Dendritic cell treated with granulocyte-macrophage colony-stimulating factor and Interleukin-4, amounts not matched to agents 40 ng/mL and 50 ng/mL, for 4 days (primary cell): ENCODE measurements at regions of chr9 and their contacts with region 1.

Region 1: DNA sequence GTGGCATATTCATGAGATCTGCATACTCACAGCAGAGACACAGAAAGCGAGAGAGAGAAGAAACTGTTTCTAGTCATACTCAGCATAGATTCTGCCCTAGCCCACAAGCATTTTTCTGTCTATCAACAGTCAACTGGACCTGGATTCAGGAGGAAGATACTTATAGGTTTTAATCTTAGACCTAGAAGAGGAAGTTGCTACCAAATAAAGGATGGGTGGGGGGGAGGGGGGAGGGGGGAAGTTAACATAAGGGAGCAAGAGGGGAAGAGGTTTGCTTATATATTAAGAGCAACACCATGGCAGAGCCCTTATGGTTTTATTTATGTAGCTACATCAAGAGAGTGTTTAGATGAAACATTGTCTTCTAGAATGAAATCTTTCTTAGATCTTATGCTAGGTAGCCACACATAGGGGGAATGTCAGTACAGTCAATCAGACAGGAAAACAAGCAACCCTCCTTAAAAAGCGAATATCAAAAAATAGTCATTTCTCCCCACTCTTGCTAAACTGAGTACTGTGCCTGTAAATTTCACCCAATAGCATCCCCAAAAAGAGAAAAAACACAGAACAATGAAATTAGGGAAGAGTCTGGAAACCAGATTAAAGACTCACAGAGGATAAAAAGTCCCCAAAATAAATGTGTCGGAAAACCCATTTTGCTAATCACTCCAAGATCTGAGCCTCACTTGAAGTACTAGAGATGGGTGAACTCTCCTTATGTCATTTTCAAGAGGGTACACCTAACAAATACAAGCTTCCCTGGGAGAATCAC is 192.7 kb upstream of the NR4A3 start:
- H3K4me3 Mint-ChIP-seq: no peak overlapping the region
- H3K27ac Mint-ChIP-seq: peak overlapping the region; percentile 3
- H3K4me1 Mint-ChIP-seq: peaks cover 39% of the 10 kb centered on the region
- H3K27me3 Mint-ChIP-seq: no peaks in the 10 kb centered on the region

Region 2: DNA sequence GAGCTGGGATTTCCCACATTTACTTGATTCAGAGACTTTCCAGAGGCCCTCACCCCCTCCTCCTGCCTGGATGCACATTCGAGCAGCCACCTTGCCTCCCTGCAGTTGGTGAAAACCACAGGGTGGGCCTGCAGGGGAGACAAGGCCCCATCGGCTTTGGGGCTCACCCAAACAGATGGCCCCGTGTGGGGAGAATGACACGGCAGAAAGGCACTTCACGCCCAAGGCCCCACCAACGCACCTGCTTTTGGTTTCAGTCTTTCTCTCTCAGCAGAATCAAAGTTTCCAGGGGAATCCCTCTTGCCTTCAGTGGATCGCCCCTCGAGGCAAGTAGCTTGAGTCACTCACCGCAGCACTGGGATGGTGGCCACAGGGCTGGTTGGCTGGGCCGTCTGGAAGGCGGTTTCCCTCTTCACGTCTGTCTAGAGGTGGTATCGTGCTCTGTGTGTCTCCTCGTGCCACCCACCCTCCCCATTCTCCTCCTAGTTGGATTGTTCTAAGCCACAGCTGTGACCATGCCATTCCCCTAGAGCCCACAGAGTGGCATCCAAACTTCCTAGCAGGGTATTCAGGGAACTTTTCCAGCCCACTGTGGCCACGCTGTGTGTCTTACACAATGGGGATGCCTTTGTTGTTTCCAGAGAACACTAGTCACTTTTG is 375.1 kb before region 1 on chr9:
- intact Hi-C with region 1: no loop called
- H3K4me3 Mint-ChIP-seq: no peak overlapping the region
- H3K27ac Mint-ChIP-seq: no peak overlapping the region
- H3K4me1 Mint-ChIP-seq: no peaks in the 10 kb centered on the region
- H3K27me3 Mint-ChIP-seq: peaks cover 2% of the 10 kb centered on the region

Region 3: GRCh38 chr9:99588299-99588698 is 40.7 kb before region 1 on chr9:
- intact Hi-C with region 1: loop called (anchors 5 kb)
- H3K4me3 Mint-ChIP-seq: no peak overlapping the region
- H3K27ac Mint-ChIP-seq: no peak overlapping the region
- H3K4me1 Mint-ChIP-seq: peaks cover 20% of the 10 kb centered on the region
- H3K27me3 Mint-ChIP-seq: no peaks in the 10 kb centered on the region

Region 4: DNA sequence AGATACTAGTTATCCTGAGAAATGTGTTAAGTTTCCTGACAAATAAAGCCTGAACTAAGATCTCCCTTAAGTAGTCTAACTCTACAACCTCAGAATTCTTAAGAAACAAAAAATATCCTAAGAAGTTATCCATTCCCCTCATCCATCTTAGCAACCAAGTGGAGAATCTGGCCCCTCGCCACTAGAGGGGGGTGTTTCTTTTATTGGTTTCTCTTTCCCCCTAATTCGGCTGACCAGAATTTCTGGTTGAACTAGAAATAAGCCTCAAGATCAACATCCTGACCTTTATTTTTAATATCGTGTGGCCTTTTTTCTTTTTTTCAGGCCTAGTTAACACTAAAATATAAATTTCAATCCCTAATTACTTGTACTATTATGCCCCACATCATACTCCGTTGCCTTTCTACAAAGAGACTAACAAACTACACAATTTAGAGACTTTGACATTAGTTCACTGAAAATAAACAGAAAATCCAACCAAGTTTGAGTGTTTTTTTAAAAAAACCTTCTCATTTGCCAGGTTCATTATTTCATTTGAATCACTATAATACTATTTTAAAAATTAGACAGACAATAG is 178.3 kb after region 1 on chr9:
- intact Hi-C with region 1: no loop called
- H3K4me3 Mint-ChIP-seq: no peak overlapping the region
- H3K27ac Mint-ChIP-seq: no peak overlapping the region
- H3K4me1 Mint-ChIP-seq: peaks cover 11% of the 10 kb centered on the region
- H3K27me3 Mint-ChIP-seq: no peaks in the 10 kb centered on the region

Region 5: GRCh38 chr9:99840072-99840471 is 211.0 kb after region 1 on chr9:
- intact Hi-C with region 1: no loop called
- H3K4me3 Mint-ChIP-seq: no peak overlapping the region
- H3K27ac Mint-ChIP-seq: no peak overlapping the region
- H3K4me1 Mint-ChIP-seq: no peaks in the 10 kb centered on the region
- H3K27me3 Mint-ChIP-seq: peaks cover 5% of the 10 kb centered on the region